Mammary epithelial cell (primary cell): ENCODE measurements at regions of chr20 and their contacts with region 1.

Region 1: DNA sequence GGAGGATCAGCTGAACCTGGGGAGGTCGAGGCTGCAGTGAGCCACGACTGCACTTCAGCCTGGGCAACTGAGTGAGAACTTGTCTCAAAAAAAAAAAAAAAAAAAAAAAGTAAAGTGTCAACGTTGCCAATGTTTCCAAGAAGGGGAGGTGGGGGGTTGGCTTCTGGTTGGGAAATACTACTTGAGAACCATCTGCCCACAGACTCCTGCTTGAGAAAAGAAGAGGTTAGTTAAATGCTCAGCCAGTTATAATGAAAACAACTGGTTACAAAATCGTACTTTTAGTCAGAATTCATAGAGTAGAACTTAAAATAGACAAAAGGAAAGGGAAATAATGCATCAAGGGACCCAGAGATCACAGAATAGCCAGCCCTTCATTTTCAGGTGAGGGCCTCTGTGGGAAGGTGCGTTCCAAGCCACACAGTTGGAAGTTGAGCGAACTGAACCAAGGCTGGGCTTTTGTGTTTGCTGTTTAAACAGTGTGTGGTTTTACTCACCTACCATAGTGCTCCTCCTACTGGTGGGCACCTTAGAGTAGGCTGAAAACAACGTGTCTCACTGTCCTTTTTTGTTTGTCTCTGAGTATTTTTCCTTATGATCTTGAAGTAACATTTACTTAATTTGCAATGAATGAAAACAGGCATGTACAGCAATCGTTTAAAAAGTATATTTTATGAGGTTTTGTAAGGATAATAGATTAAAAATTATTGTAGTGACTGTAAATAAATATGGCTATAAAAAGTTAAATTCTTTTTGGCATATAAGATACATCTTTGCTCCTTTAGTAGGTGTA is 200.7 kb downstream of the BCAS1 start:
- DNase-seq: peak; percentile 81
- H3K4me3 ChIP-seq: no peak overlapping the region
- H3K27ac ChIP-seq: peak overlapping the region; percentile 74
- H3K4me1 ChIP-seq: peaks cover 56% of the 10 kb centered on the region
- H3K27me3 ChIP-seq: no peaks in the 10 kb centered on the region
- CTCF ChIP-seq: peak; percentile 91 to 94

Region 2: DNA sequence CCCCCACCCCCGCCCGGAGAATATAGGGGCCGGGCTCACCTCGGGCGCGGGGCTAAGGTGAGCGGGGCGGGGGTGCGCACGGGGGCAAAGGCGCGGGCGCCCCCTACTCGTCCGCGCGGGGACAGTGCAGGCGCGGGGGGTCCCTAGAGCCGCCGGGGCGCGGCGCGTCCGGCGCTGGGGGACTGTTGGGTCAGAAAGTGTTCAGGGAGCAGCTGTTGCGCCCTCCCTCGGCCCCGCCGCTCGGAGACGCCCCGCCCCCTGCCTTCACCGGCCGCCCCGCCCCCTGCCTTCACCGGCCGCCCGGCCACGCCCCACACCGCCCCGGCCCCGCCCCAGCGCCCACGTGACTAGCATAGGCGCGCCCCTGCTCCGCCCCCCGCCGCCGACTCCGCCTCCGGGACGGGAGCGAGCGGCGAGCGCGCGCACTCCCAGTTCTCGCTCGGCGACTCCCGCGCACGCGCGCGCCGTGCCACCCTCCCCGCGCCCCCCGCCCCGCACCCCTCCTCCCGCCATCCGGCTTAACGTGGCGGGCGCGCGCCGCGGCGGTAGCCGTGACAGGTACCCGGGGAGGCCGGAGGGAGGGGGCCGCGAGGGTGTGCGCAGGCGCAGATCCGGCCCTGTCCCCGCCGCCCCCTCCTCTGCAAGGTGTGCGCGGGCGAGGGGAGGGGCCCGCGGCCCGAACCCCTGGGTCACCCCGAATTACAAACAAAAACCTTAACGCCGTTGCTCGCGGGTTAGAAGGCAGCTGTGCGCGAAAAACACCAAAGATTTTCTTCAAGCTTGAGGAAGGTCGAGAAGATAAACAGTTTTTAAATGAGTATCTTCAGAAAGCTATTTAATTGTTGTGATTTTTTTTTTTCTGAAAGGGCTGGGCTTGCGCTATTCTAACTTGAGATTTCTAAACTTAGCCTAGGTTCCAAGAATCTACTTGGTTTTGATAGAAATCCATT is 275.3 kb before region 1 on chr20:
- CTCF ChIA-PET with region 1: interaction called, 9 read pairs
- dilution Hi-C with region 1: no loop called
- in situ Hi-C with region 1: no loop called
- intact Hi-C with region 1: loop called (anchors 2 kb)
- DNase-seq: peak; percentile 85
- H3K4me3 ChIP-seq: peak overlapping the region; percentile 67 to 85 (median 83)
- H3K27ac ChIP-seq: peak overlapping the region; percentile 81
- H3K4me1 ChIP-seq: peaks cover 28% of the 10 kb centered on the region
- H3K27me3 ChIP-seq: no peaks in the 10 kb centered on the region
- CTCF ChIP-seq: no peak

Region 3: DNA sequence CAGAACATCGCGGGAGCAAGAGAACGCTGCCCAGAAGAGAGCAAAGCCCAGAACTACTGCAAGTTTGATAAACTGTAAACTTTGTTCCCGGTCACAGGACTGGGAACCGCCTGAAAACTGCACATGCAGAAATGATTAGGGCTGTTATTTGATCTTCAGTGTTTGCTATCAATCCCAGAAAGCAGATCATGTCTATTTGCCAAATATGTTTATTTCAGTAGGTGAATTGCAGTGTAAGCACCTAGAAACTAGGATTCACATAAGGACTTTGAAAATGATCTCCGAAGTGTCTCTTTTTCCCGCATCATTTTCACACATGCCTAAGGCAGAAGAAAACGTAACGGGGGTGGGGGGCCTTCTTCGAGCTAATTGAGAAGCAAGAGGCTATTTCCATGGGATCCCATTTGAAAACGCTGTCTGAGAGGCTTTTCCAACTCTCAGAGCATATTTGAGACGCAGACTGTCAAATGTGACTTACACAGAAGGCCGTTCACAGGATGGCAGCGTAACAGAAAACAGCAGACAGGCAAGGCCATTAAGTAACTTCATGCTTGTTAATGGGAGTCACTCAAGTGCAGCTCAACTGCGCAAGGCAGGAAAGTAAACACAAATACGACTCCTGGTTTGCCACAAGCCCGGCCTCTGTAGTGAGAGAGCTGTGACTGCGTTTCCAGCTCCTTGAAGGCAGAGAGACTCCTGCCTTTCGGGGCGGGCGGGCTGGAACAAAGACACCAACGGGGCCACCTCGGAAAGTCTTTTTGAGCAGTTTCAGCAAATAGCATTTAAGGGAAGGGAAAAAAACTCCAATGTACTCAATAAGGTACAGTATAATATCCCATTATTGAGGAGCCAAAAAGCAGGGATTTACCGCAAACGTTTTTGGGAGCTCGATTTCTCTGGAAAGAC is 131.4 kb before region 1 on chr20:
- CTCF ChIA-PET with region 1: no interaction called
- dilution Hi-C with region 1: no loop called
- in situ Hi-C with region 1: no loop called
- intact Hi-C with region 1: loop called (anchors 2 kb)
- DNase-seq: peak; percentile 78
- H3K4me3 ChIP-seq: no peak overlapping the region
- H3K27ac ChIP-seq: no peak overlapping the region
- H3K4me1 ChIP-seq: peaks cover 29% of the 10 kb centered on the region
- H3K27me3 ChIP-seq: no peaks in the 10 kb centered on the region
- CTCF ChIP-seq: no peak

Region 4: GRCh38 chr20:53773792-53774401 is 95.8 kb before region 1 on chr20:
- CTCF ChIA-PET with region 1: no interaction called
- dilution Hi-C with region 1: no loop called
- in situ Hi-C with region 1: no loop called
- intact Hi-C with region 1: loop called (anchors 5 kb)
- DNase-seq: peak; percentile 94
- H3K4me3 ChIP-seq: peak overlapping the region in 1 of 3 experiments; percentile 27
- H3K27ac ChIP-seq: peak overlapping the region; percentile 100
- H3K4me1 ChIP-seq: peaks cover 25% of the 10 kb centered on the region
- H3K27me3 ChIP-seq: no peaks in the 10 kb centered on the region
- CTCF ChIP-seq: no peak

Region 5: GRCh38 chr20:53805895-53806384 is 63.7 kb before region 1 on chr20:
- CTCF ChIA-PET with region 1: no interaction called
- dilution Hi-C with region 1: no loop called
- in situ Hi-C with region 1: no loop called
- intact Hi-C with region 1: loop called (anchors 5 kb)
- DNase-seq: peak; percentile 88
- H3K4me3 ChIP-seq: no peak overlapping the region
- H3K27ac ChIP-seq: peak overlapping the region; percentile 89
- H3K4me1 ChIP-seq: peaks cover 23% of the 10 kb centered on the region
- H3K27me3 ChIP-seq: no peaks in the 10 kb centered on the region
- CTCF ChIP-seq: no peak

Region 6: GRCh38 chr20:53899351-53900167 is 29.9 kb after region 1 on chr20:
- CTCF ChIA-PET with region 1: no interaction called
- dilution Hi-C with region 1: no loop called
- in situ Hi-C with region 1: no loop called
- intact Hi-C with region 1: loop called (anchors 5 kb)
- DNase-seq: peak; percentile 96
- H3K4me3 ChIP-seq: no peak overlapping the region
- H3K27ac ChIP-seq: peak overlapping the region; percentile 87
- H3K4me1 ChIP-seq: peaks cover 64% of the 10 kb centered on the region
- H3K27me3 ChIP-seq: no peaks in the 10 kb centered on the region
- CTCF ChIP-seq: no peak

Region 7: GRCh38 chr20:53915446-53916172 is 45.9 kb after region 1 on chr20:
- CTCF ChIA-PET with region 1: interaction called, 6 read pairs
- dilution Hi-C with region 1: no loop called
- in situ Hi-C with region 1: no loop called
- intact Hi-C with region 1: loop called (anchors 1 kb)
- DNase-seq: peak; percentile 91
- H3K4me3 ChIP-seq: peak overlapping the region; percentile 42 to 50 (median 48)
- H3K27ac ChIP-seq: peak overlapping the region; percentile 76
- H3K4me1 ChIP-seq: peaks cover 46% of the 10 kb centered on the region
- H3K27me3 ChIP-seq: no peaks in the 10 kb centered on the region
- CTCF ChIP-seq: peak; percentile 82 to 86

Region 8: GRCh38 chr20:53990768-53991450 is 121.2 kb after region 1 on chr20:
- CTCF ChIA-PET with region 1: no interaction called
- dilution Hi-C with region 1: no loop called
- in situ Hi-C with region 1: no loop called
- intact Hi-C with region 1: no loop called
- DNase-seq: no peak
- H3K4me3 ChIP-seq: no peak overlapping the region
- H3K27ac ChIP-seq: no peak overlapping the region
- H3K4me1 ChIP-seq: no peaks in the 10 kb centered on the region
- H3K27me3 ChIP-seq: peaks cover 1% of the 10 kb centered on the region
- CTCF ChIP-seq: no peak

Region 9: DNA sequence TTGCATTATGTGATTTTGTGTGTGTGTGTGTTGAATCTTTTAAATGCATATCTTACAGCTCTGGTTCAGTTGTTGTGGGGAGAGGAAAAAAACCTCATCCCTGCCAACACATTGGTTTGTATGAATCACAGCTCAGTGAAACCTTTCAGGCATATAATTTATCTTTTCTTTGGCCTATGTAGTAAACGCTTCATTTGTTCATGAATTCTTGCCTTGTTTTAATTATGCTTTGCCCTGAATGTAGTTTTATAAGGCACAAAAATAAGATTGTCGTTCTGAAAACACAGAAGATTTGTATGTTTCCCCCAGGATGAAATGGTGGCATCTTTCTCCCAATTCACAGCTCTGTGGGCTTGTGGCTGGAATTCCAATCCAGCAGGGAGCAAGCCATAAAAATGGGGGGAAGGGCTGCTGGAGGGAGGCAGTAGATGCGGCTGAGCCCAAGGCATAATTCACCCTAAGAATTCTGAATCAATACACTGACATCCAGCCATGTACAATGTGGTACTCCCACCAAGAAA is 155.6 kb after region 1 on chr20:
- CTCF ChIA-PET with region 1: no interaction called
- dilution Hi-C with region 1: no loop called
- in situ Hi-C with region 1: no loop called
- intact Hi-C with region 1: no loop called
- DNase-seq: no peak
- H3K4me3 ChIP-seq: no peak overlapping the region
- H3K27ac ChIP-seq: no peak overlapping the region
- H3K4me1 ChIP-seq: no peaks in the 10 kb centered on the region
- H3K27me3 ChIP-seq: no peaks in the 10 kb centered on the region
- CTCF ChIP-seq: no peak